ENCODE measurements at regions of chr13 and their contacts with region 1.

Region 1: DNA sequence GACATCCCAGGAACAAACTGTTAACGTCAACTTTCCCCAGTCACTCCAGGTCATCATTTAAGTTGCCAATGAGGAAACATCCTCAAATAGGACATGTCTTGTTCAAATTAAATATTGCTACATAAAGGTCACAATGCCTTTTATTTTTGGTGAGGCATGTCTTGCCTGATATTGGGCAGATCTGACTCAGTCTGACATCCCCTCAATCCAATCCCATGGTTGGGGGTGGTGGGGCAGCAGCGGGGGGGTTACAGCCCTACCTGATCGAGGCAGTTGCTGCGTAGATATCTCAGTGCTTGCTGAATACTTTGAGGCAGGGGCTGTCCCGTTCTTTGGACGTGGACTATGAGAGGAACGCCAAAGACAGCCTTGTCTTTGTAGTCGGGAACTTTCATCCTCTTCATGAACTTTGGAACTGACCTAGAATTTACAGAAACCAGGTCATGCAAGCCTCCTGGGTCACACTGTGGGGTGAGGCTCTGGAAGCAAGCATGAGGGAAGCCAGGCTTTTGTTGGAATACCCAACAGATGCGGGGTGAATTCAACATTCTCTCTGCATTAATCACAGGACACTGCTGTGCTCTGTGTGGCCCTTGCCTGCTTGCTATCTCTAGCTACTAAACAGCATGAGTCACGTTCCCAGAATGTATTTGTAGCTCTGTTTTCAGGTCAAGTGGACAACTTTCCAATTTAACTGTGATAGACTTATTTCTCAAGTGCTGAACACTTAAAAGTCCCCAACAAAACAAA is 109.8 kb downstream of the KL start:
- DNase-seq: peak; percentile 80
- H3K4me3 ChIP-seq: no peak overlapping the region
- H3K27ac ChIP-seq: peak overlapping the region; percentile 33
- H3K4me1 ChIP-seq: peaks cover 17% of the 10 kb centered on the region
- H3K27me3 ChIP-seq: no peaks in the 10 kb centered on the region
- CTCF ChIP-seq: no peak

Region 2: DNA sequence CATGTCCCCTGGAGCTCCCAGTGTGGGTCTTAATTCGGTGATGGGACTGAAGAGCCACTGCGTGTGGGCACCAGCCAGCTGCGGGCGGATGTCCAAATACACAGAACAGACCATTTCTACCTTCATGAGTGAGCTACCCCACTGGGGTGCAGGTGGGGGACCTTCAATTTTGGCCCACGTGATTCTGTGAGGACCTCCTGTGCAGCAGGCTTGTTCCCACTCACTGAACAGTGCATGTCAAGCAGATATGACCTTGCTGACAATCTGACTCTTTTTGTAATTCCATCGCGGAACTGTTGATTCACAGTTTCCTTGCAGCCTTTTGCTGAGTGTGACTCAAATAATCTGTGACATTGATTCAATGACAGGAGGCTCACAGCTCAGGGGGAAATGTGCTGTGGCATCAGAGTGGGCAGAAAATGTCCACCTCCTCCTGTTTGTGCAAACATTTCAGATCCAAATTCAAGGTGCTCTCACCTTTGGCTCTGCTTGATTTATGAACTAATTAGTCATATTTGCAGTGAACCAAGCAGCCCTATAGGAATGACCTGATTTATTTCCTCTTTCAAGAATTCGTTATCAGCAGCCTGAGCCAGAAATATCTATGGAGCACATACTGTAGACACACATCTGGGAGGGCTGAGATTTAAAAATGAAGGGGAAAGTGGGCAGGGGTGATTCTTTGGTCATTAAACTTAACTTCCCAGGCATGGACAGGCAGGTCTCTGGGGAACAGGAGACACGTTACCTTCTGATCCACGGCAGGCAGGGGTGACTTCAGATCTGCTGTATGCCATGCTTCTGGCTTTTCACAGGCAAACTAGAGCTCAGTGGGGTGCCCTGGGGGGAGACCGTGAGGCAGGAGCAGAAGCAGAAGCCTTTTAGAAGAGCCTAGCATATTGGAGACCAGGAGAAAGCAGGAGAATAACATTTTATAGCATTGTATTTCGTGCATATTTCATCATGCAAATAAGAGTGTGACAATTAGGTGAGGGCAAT is 279.7 kb before region 1 on chr13:
- CTCF ChIA-PET with region 1: no interaction called
- dilution Hi-C with region 1: no loop called
- in situ Hi-C with region 1: no loop called
- intact Hi-C with region 1: no loop called
- DNase-seq: no peak
- H3K4me3 ChIP-seq: no peak overlapping the region
- H3K27ac ChIP-seq: no peak overlapping the region
- H3K4me1 ChIP-seq: peaks cover 2% of the 10 kb centered on the region
- H3K27me3 ChIP-seq: peaks cover 7% of the 10 kb centered on the region
- CTCF ChIP-seq: no peak

Region 3: GRCh38 chr13:33057019-33057780 is 68.8 kb before region 1 on chr13:
- CTCF ChIA-PET with region 1: no interaction called
- dilution Hi-C with region 1: loop called (anchors 5 kb)
- in situ Hi-C with region 1: no loop called
- intact Hi-C with region 1: no loop called
- DNase-seq: peak; percentile 2
- H3K4me3 ChIP-seq: no peak overlapping the region
- H3K27ac ChIP-seq: no peak overlapping the region
- H3K4me1 ChIP-seq: no peaks in the 10 kb centered on the region
- H3K27me3 ChIP-seq: peaks cover 2% of the 10 kb centered on the region
- CTCF ChIP-seq: peak; percentile 28 to 40

Region 4: GRCh38 chr13:33218001-33218400 is 92.0 kb after region 1 on chr13:
- CTCF ChIA-PET with region 1: no interaction called
- dilution Hi-C with region 1: no loop called
- in situ Hi-C with region 1: no loop called
- intact Hi-C with region 1: loop called (anchors 5 kb)
- DNase-seq: peak; percentile 55
- H3K4me3 ChIP-seq: no peak overlapping the region
- H3K27ac ChIP-seq: peak overlapping the region; percentile 98
- H3K4me1 ChIP-seq: peaks cover 45% of the 10 kb centered on the region
- H3K27me3 ChIP-seq: no peaks in the 10 kb centered on the region
- CTCF ChIP-seq: no peak

Region 5: DNA sequence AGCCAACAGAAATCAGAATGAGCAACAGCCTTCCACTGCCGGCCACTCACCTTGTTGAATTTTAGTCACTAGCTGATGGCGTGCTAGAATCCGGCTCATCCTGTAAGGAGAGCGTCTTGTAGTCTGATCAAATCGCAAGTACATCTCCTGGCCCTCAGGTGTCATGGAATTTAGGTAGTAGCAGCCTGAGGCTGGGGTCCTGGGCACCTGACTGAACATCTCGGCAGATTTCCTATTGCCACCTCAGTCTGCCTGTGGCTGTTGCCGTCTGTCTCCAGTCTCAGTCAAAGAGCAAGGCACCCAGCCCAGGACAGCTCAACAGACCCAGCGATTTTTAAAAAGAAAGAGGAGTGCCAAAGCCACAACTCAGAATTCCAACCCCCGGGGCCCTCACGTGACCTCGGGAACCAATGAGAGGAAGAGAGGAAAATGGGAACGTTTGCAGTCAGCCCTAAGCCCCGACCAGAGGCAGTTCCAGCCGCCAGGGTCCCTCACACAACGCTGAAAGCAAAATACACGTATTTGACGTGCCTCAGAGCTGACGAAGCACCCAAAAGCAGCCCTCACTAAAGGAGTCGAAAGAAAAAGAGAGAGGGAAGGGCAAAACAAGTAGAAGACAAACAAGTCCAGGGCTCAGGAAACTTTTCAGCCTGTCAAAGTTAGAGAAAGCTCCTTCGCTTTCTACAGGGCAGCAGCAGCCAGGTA is 159.6 kb after region 1 on chr13 and contains the start of gene STARD13:
- CTCF ChIA-PET with region 1: interaction called, 5 read pairs
- dilution Hi-C with region 1: no loop called
- in situ Hi-C with region 1: no loop called
- intact Hi-C with region 1: loop called (anchors 10 kb)
- DNase-seq: peak; percentile 96
- H3K4me3 ChIP-seq: peak within 1 kb of the TSS; percentile 67 to 94 (median 71)
- H3K27ac ChIP-seq: peak within 1 kb of the TSS; percentile 99
- H3K4me1 ChIP-seq: peaks cover 29% of the 10 kb centered on the region
- H3K27me3 ChIP-seq: no peaks in the 10 kb centered on the region
- CTCF ChIP-seq: peak; percentile 20 to 36
- total RNA-seq, gene STARD13: 10.8 to 15.5 TPM

Measured in mammary epithelial cell (primary cell).